HCT116 (cell line): ENCODE measurements at regions of chr5 and their contacts with region 1.

Region 1: DNA sequence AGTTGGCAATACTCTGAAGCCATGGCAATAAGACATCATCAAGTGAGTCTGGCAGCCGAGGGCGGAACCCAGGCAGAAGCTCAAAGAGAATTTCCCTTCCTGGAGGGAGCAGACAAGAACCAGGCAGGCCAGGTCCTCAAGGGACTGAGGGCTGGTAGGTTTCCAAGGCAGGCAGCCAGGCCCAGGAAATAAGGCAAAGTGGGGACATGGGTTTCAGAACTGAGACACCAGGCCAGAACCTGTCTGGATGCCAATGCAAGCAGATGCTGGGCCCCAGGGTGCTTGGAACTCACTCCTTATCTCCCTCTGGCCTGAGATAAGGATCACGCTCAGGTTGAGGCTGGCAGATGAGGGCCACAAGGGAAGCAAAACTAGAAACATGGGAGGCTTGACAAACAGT is 8.9 kb downstream of the TSSK1B start:
- DNase-seq: no peak
- ATAC-seq: no peak
- H3K4me3 ChIP-seq: no peak overlapping the region
- H3K27ac ChIP-seq: no peak overlapping the region
- H3K4me1 ChIP-seq: no peaks in the 10 kb centered on the region
- H3K27me3 ChIP-seq: no peaks in the 10 kb centered on the region
- CTCF ChIP-seq: no peak
- POLR2A ChIP-seq: no peak
- RAD21 ChIP-seq: no peak

Region 2: GRCh38 chr5:113067635-113068344 is 358.1 kb before region 1 on chr5:
- CTCF ChIA-PET with region 1: no interaction called
- POLR2A ChIA-PET with region 1: no interaction called
- RAD21 ChIA-PET with region 1: no interaction called
- intact Hi-C with region 1: no loop called
- DNase-seq: no peak
- ATAC-seq: no peak
- H3K4me3 ChIP-seq: no peak overlapping the region
- H3K27ac ChIP-seq: no peak overlapping the region
- H3K4me1 ChIP-seq: peaks cover 4 to 5% of the 10 kb centered on the region in 2 experiments; a peak in 2 of 4 replicates
- H3K27me3 ChIP-seq: no peaks in the 10 kb centered on the region
- CTCF ChIP-seq: no peak
- POLR2A ChIP-seq: no peak
- RAD21 ChIP-seq: no peak

Region 3: GRCh38 chr5:113187906-113188305 is 238.0 kb before region 1 on chr5:
- CTCF ChIA-PET with region 1: no interaction called
- POLR2A ChIA-PET with region 1: no interaction called
- RAD21 ChIA-PET with region 1: no interaction called
- intact Hi-C with region 1: no loop called
- DNase-seq: no peak
- ATAC-seq: no peak
- H3K4me3 ChIP-seq: no peak overlapping the region
- H3K27ac ChIP-seq: no peak overlapping the region
- H3K4me1 ChIP-seq: peaks cover 0 to 19% of the 10 kb centered on the region in 2 experiments; a peak in 2 of 4 replicates
- H3K27me3 ChIP-seq: no peaks in the 10 kb centered on the region
- CTCF ChIP-seq: no peak
- POLR2A ChIP-seq: no peak
- RAD21 ChIP-seq: no peak

Region 4: GRCh38 chr5:113367586-113367985 is 58.3 kb before region 1 on chr5:
- CTCF ChIA-PET with region 1: no interaction called
- POLR2A ChIA-PET with region 1: no interaction called
- RAD21 ChIA-PET with region 1: no interaction called
- intact Hi-C with region 1: loop called (anchors 10 kb)
- DNase-seq: no peak
- ATAC-seq: no peak
- H3K4me3 ChIP-seq: no peak overlapping the region
- H3K27ac ChIP-seq: no peak overlapping the region
- H3K4me1 ChIP-seq: no peaks in the 10 kb centered on the region
- H3K27me3 ChIP-seq: no peaks in the 10 kb centered on the region
- CTCF ChIP-seq: no peak
- POLR2A ChIP-seq: no peak
- RAD21 ChIP-seq: no peak